ENCODE measurements at regions of chr19 and their contacts with region 1.

Region 1: DNA sequence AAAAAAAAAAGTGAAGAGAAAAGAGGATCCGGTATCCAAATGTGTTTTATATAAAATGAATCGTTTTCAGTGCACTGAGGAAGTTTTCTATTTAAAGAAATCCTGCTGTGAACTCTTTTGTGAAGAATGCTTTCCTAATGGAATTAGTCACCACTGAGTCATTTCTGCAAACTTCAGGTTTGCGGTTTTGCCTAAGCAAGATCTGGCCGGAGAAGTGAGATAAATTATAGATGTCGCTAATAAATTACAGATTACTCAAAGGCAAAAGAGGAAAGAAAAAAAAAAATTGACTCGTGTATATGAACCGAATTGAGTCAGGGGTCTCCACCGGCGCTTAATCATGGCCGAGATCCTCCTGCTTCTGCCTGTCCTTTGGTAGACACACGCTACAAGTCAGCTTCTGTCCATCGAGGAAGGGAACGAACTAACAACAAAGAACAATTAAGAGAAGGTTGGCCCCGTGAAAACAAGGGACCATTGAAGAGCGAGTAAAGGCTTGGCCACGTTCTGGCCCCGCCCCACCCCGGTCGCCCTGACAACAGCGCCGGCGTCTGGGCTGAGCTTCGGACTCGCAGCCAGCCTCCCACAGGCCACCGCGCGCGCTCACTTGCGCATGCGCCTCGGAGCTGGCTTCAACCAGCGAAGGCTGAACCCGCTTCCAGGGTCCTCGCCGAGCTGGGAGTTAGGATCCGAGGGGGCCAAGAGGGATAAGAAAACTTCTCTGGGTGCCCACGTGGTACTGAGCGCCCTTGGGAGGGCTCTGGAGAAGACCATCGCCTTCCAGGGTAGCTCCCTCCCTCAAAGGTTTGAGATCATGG is 33.0 kb upstream of the MRI1 start:
- DNase-seq: peak; percentile 93
- H3K4me3 Mint-ChIP-seq: peak overlapping the region; percentile 90
- H3K27ac Mint-ChIP-seq: peak overlapping the region; percentile 96
- H3K4me1 Mint-ChIP-seq: peaks cover 19% of the 10 kb centered on the region
- H3K27me3 Mint-ChIP-seq: no peaks in the 10 kb centered on the region

Region 2: GRCh38 chr19:13621413-13621812 is 109.9 kb before region 1 on chr19:
- intact Hi-C with region 1: no loop called
- DNase-seq: no peak
- H3K4me3 Mint-ChIP-seq: no peak overlapping the region
- H3K27ac Mint-ChIP-seq: no peak overlapping the region
- H3K4me1 Mint-ChIP-seq: no peaks in the 10 kb centered on the region
- H3K27me3 Mint-ChIP-seq: peaks cover 28% of the 10 kb centered on the region

Region 3: GRCh38 chr19:13748169-13748828 is 16.9 kb after region 1 on chr19:
- intact Hi-C with region 1: loop called (anchors 1 kb)
- DNase-seq: peak; percentile 6
- H3K4me3 Mint-ChIP-seq: peak overlapping the region; percentile 96
- H3K27ac Mint-ChIP-seq: peak overlapping the region; percentile 93
- H3K4me1 Mint-ChIP-seq: peaks cover 10% of the 10 kb centered on the region
- H3K27me3 Mint-ChIP-seq: no peaks in the 10 kb centered on the region

Region 4: DNA sequence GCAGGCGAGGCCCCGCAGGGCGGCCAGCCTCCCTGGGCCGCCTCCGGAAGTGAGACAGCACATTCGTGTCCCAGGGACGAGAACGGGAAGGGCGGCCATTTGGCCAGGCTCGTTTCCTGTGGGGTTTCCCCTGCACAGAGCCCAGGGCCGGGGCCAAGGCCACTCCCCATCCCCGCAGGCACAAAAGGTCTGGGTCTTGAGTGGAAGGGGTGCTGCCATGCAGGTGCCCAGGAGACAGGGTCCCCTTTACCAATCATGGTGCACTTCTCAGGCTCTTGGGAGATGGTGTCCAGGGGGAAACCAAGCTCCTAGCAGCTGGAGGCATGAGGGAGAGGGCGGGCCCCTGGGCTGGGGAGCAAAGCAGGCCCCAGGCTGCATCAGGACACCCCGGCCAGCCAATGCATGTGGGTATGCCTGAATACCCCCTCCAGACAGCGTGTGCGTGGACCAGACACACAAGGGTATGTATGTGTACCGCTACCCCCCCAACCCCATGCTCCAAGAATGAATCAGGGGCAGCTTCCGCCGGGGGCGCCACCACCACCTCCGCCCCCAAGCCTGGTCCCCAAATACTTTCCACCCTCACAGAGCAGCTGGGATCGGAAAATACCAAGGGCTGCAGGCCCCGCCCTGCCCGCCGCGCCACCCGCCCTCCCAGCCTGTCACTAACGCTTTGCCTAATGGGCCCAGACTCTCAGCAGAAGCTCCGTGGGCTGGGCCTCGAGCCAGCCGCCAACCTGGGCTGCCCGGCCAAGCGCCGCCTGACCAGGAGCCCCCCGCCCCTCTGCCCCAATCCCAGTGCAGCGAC is 108.0 kb after region 1 on chr19:
- intact Hi-C with region 1: loop called (anchors 2 kb)
- DNase-seq: peak; percentile 79
- H3K4me3 Mint-ChIP-seq: peak overlapping the region; percentile 93
- H3K27ac Mint-ChIP-seq: peak overlapping the region; percentile 99
- H3K4me1 Mint-ChIP-seq: peaks cover 36% of the 10 kb centered on the region
- H3K27me3 Mint-ChIP-seq: no peaks in the 10 kb centered on the region

Region 5: DNA sequence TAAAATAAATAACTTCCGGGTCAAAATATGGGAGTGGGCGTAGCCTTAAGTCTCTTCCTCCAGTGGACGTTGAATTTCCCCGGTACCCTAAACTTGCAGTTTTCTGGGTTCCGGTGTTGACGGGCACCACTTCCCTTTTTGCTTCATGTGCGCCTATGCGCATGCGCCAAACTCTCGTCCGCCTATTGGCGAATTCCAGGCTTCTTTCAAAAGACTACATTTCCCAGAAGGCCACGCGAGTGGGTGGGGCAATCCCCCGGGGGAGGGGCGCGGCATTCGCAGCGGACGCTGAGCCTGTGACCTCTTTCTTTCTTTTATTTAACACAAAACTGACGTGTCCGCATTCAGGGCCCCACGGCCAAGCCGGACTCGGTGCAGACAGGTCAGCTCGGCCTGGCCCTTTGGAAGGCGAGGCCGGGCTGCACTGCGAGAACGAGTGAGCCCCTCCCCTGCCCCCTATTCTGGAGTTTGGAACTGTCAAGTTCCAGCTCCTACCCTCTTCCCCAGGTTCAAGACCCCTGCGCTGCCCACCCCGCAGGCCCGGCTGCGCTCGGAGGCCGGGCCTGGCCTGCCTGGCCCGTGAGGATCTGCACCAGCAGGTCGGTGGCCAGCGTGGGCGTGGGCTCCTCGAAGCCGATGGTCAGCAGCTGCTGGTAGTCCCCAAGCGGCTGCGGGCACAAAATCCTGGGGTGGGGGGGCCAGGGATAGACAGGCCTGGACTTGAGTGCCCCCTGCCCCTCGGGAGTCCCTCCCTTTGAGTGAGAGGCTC is 350.2 kb after region 1 on chr19:
- intact Hi-C with region 1: loop called (anchors 1 kb)
- DNase-seq: peak; percentile 99
- H3K4me3 Mint-ChIP-seq: peak overlapping the region; percentile 96
- H3K27ac Mint-ChIP-seq: peak overlapping the region; percentile 97
- H3K4me1 Mint-ChIP-seq: peaks cover 8% of the 10 kb centered on the region
- H3K27me3 Mint-ChIP-seq: no peaks in the 10 kb centered on the region

Region 6: DNA sequence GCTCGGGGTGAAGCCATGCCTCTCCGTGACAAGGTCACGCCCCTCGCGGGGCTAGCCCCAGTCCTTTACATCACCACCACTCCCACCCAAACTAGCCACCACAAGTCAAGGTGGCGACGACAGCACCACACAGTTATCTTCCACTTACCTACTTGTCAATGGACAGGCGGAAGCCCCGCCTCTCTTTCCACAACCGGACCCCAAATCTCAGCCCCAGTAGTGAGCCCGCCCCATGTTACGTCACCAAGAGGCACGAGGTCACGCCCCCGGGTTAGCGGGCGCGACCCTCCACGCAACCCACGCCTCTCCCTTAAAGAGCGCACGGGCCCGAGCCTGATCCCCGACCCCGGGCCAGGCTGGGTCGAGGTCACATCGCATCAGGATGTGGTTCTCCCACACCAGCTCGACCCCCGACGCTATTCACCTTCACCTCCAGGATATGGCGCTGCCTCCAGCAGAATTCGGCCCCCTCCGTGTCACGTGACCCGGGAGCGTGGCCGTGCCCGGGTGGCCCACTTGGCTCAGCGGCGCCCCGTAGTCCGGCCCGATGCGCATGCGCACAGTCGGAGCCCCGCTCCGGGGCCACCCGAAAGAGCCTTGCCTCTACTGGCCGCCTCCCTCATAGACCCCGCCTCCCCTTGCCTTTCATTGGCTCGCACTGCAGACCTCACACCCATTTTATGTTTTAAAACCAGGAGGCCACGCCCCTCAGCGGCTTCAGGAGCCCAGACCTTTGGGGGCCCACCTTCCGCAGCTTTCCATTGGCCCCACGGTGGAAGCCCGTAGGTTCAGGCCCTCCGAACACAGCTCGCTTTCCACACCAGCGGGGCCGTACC is 1394.1 kb after region 1 on chr19:
- intact Hi-C with region 1: loop called (anchors 1 kb)
- DNase-seq: peak; percentile 97
- H3K4me3 Mint-ChIP-seq: peak overlapping the region; percentile 91
- H3K27ac Mint-ChIP-seq: peak overlapping the region; percentile 98
- H3K4me1 Mint-ChIP-seq: peaks cover 37% of the 10 kb centered on the region
- H3K27me3 Mint-ChIP-seq: no peaks in the 10 kb centered on the region

Measured in activated T-helper 1 cell treated with anti-CD3 and anti-CD28 coated beads, Interleukin-12 subunit alpha, Interleukin-12 subunit beta, Interleukin-2, Interleukin-4 antibody, amounts not matched to agents 30 ng/mL and 10 ng/mL and 1 ng/mL, durations not matched to agents 14 hours and 24 hours and 36 hours (primary cell).